ENCODE measurements at regions of chr1 and their contacts with region 1.

Region 1: GRCh38 chr1:179706339-179706941 is 36.7 kb upstream of the FAM163A start:
- DNase-seq: peak; percentile 56 to 66 (median 59)
- H3K4me3 ChIP-seq: no peak overlapping the region
- H3K4me3 Mint-ChIP-seq: no peak overlapping the region
- H3K27ac ChIP-seq: no peak overlapping the region
- H3K27ac Mint-ChIP-seq: peak overlapping the region; percentile 44 to 85 (median 76)
- H3K4me1 ChIP-seq: peaks cover 18% of the 10 kb centered on the region
- H3K4me1 Mint-ChIP-seq: peaks cover 5 to 22% (median 17%) of the 10 kb centered on the region in 4 donors
- H3K27me3 ChIP-seq: no peaks in the 10 kb centered on the region
- H3K27me3 Mint-ChIP-seq: peaks cover 0 to 5% of the 10 kb centered on the region in 2 donors

Region 2: GRCh38 chr1:179510038-179510437 is 196.4 kb before region 1 on chr1:
- CTCF ChIA-PET with region 1: no interaction called
- POLR2A ChIA-PET with region 1: no interaction called
- intact Hi-C with region 1: no loop called
- DNase-seq: no peak
- H3K4me3 ChIP-seq: no peak overlapping the region
- H3K4me3 Mint-ChIP-seq: no peak overlapping the region
- H3K27ac ChIP-seq: no peak overlapping the region
- H3K27ac Mint-ChIP-seq: no peak overlapping the region
- H3K4me1 ChIP-seq: no peaks in the 10 kb centered on the region
- H3K4me1 Mint-ChIP-seq: no peaks in the 10 kb centered on the region
- H3K27me3 ChIP-seq: no peaks in the 10 kb centered on the region
- H3K27me3 Mint-ChIP-seq: peaks cover 0 to 3% of the 10 kb centered on the region in 2 donors

Region 3: GRCh38 chr1:179816196-179816960 is 109.9 kb after region 1 on chr1:
- CTCF ChIA-PET with region 1: interaction called, 446 read pairs
- POLR2A ChIA-PET with region 1: interaction called, 13 read pairs
- intact Hi-C with region 1: loop called (anchors 1 kb)
- DNase-seq: no peak
- H3K4me3 ChIP-seq: no peak overlapping the region
- H3K4me3 Mint-ChIP-seq: peak overlapping the region; percentile 92 to 100 (median 96)
- H3K27ac ChIP-seq: no peak overlapping the region
- H3K27ac Mint-ChIP-seq: peak overlapping the region in 6 of 7 donors; percentile 43 to 99 (median 92)
- H3K4me1 ChIP-seq: peaks cover 17% of the 10 kb centered on the region
- H3K4me1 Mint-ChIP-seq: peaks cover 10 to 26% (median 22%) of the 10 kb centered on the region in 4 donors
- H3K27me3 ChIP-seq: no peaks in the 10 kb centered on the region
- H3K27me3 Mint-ChIP-seq: no peaks in the 10 kb centered on the region

Region 4: GRCh38 chr1:180168786-180169639 is 462.6 kb after region 1 on chr1:
- CTCF ChIA-PET with region 1: interaction called, 6 read pairs
- POLR2A ChIA-PET with region 1: no interaction called
- intact Hi-C with region 1: loop called (anchors 2 kb)
- DNase-seq: peak in 3 of 5 donors; percentile 8 to 30 (median 11)
- H3K4me3 ChIP-seq: no peak overlapping the region
- H3K4me3 Mint-ChIP-seq: no peak overlapping the region
- H3K27ac ChIP-seq: no peak overlapping the region
- H3K27ac Mint-ChIP-seq: peak overlapping the region in 2 of 7 donors; percentile 20 to 26
- H3K4me1 ChIP-seq: no peaks in the 10 kb centered on the region
- H3K4me1 Mint-ChIP-seq: peaks cover 0 to 3% (median 2%) of the 10 kb centered on the region in 4 donors
- H3K27me3 ChIP-seq: no peaks in the 10 kb centered on the region
- H3K27me3 Mint-ChIP-seq: no peaks in the 10 kb centered on the region